ENCODE measurements at regions of chr3 and their contacts with region 1.

Region 1: DNA sequence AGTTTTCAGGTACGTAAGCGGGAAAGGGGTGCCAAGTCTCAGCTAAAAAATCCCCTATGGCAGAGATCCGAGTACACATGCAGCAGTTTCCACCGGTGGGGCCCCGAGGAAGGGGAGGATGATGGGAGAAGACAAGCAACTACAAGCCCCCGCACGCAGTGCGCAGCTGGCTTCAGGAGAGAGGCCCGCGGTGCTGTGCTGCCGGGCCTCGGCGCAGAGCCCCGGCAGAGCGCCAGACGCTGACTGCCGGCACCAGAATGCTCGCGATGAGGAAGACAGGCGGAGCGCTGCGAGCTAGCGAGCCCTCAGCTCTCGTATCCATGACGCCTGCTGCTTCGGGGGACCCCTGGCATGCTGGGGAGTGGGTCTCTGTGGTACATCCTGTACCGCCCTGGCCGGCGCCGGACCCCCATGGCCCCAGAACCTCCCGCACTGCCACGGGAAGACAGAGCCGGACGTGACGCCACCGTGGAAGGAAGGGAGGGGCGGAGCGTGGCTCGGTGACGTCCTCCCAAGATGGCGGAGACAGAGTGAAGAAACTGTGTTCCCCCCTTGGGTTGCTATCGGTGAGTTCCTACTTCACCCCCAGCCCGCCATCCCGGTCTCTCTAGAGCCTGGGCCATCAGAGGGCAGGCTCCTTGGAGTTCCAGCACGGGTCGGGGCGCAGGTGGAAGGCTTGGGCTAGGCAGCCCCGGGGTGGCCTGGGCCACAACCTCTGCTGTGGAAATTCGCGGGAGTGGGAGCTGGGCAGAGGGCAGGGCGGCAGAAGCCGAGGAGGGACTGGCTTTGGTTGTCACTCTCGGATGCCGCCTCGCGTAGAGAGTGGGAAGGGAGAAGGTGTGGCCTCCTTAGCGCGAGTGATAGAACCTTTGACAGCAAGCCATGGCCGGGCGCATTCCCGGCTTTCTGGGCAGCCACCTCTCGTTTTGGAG is at the start of gene MYNN:
- DNase-seq: peak; percentile 83 to 97 (median 92)
- ATAC-seq: peak; percentile 78
- H3K4me3 ChIP-seq: peak within 1 kb of the TSS; percentile 93 to 99
- H3K4me3 Mint-ChIP-seq: peak within 1 kb of the TSS; percentile 99
- H3K27ac ChIP-seq: peak within 1 kb of the TSS; percentile 97 to 100
- H3K27ac Mint-ChIP-seq: peak within 1 kb of the TSS; percentile 99
- H3K4me1 ChIP-seq: peaks cover 30% of the 10 kb centered on the region
- H3K4me1 Mint-ChIP-seq: peaks cover 50% of the 10 kb centered on the region
- H3K27me3 ChIP-seq: no peaks in the 10 kb centered on the region
- H3K27me3 Mint-ChIP-seq: no peaks in the 10 kb centered on the region
- CTCF ChIP-seq: no peak
- total RNA-seq, gene MYNN: 21.1 to 24.7 TPM

Region 2: GRCh38 chr3:169744366-169745054 is 28.7 kb before region 1 on chr3:
- CTCF ChIA-PET with region 1: no interaction called
- POLR2A ChIA-PET with region 1: no interaction called
- intact Hi-C with region 1: no loop called
- DNase-seq: peak in 1 of 9 experiments; percentile 22
- ATAC-seq: no peak
- H3K4me3 ChIP-seq: no peak overlapping the region
- H3K4me3 Mint-ChIP-seq: no peak overlapping the region
- H3K27ac ChIP-seq: no peak overlapping the region
- H3K27ac Mint-ChIP-seq: no peak overlapping the region
- H3K4me1 ChIP-seq: no peaks in the 10 kb centered on the region
- H3K4me1 Mint-ChIP-seq: peaks cover 3% of the 10 kb centered on the region
- H3K27me3 ChIP-seq: no peaks in the 10 kb centered on the region
- H3K27me3 Mint-ChIP-seq: peaks cover 20% of the 10 kb centered on the region
- CTCF ChIP-seq: peak; percentile 35

Region 3: GRCh38 chr3:169812332-169813235 is 39.4 kb after region 1 on chr3 and contains the starts of genes LRRC34 and LRRIQ4:
- CTCF ChIA-PET with region 1: no interaction called
- POLR2A ChIA-PET with region 1: interaction called, 17 read pairs
- intact Hi-C with region 1: loop called (anchors 1 to 2 kb)
- DNase-seq: peak; percentile 12 to 79 (median 68)
- ATAC-seq: peak; percentile 37
- H3K4me3 ChIP-seq: peak within 1 kb of the TSS; percentile 47 to 54
- H3K4me3 Mint-ChIP-seq: peak within 1 kb of the TSS; percentile 89
- H3K27ac ChIP-seq: peak within 1 kb of the TSS; percentile 2
- H3K27ac Mint-ChIP-seq: peak within 1 kb of the TSS; percentile 74
- H3K4me1 ChIP-seq: peaks cover 16% of the 10 kb centered on the region
- H3K4me1 Mint-ChIP-seq: peaks cover 28% of the 10 kb centered on the region
- H3K27me3 ChIP-seq: no peaks in the 10 kb centered on the region
- H3K27me3 Mint-ChIP-seq: no peaks in the 10 kb centered on the region
- CTCF ChIP-seq: no peak
- total RNA-seq, gene LRRC34: 0.36 to 0.54 TPM
- total RNA-seq, gene LRRIQ4: not detected

Region 4: DNA sequence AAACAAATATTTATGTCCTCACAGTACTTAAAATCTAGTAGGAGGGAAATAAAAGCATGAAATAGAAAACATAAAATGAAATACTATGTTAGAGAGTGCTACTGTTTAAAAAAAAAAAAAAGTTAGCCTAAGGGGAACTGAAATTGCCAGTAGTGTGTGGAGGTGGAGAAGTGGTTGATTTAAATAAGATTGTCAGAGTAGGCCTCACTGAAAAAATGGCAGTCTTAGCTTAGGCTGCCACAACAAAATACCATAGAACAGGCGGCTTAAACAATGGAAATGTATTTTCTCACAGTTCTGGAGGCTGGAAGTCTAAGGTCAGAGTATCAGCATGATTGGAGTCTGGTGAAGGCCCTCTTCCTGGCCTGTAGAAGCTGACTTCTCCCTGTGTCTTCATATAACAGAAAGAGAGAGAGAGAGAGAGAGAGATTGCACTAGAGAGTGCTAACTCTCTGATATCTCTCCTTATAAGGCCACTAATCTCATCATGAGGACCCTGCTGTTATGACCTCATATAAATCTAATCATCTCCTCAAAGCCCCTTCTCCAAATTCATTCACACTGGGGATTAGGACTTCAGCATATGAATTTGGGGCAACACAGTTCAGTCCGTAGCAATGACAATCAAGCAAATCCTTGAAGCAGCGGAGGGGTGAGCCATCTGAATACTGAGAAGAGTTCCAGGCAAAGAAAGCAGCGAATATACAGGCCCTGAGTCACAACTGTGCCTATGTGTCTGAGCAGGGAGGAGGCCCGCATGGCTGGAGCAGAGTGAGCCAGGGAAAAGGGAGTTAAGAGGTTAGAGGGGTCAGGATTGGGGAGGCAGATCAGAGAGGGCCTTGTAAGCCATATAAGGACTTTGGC is 63.1 kb after region 1 on chr3:
- CTCF ChIA-PET with region 1: no interaction called
- POLR2A ChIA-PET with region 1: no interaction called
- intact Hi-C with region 1: no loop called
- DNase-seq: no peak
- ATAC-seq: no peak
- H3K4me3 ChIP-seq: no peak overlapping the region
- H3K4me3 Mint-ChIP-seq: no peak overlapping the region
- H3K27ac ChIP-seq: no peak overlapping the region
- H3K27ac Mint-ChIP-seq: no peak overlapping the region
- H3K4me1 ChIP-seq: no peaks in the 10 kb centered on the region
- H3K4me1 Mint-ChIP-seq: no peaks in the 10 kb centered on the region
- H3K27me3 ChIP-seq: no peaks in the 10 kb centered on the region
- H3K27me3 Mint-ChIP-seq: peaks cover 11% of the 10 kb centered on the region
- CTCF ChIP-seq: no peak

Region 5: GRCh38 chr3:169923189-169923588 is 150.0 kb after region 1 on chr3:
- CTCF ChIA-PET with region 1: no interaction called
- POLR2A ChIA-PET with region 1: no interaction called
- intact Hi-C with region 1: no loop called
- DNase-seq: no peak
- ATAC-seq: no peak
- H3K4me3 ChIP-seq: no peak overlapping the region
- H3K4me3 Mint-ChIP-seq: no peak overlapping the region
- H3K27ac ChIP-seq: no peak overlapping the region
- H3K27ac Mint-ChIP-seq: no peak overlapping the region
- H3K4me1 ChIP-seq: no peaks in the 10 kb centered on the region
- H3K4me1 Mint-ChIP-seq: no peaks in the 10 kb centered on the region
- H3K27me3 ChIP-seq: no peaks in the 10 kb centered on the region
- H3K27me3 Mint-ChIP-seq: peaks cover 3% of the 10 kb centered on the region
- CTCF ChIP-seq: no peak

Region 6: GRCh38 chr3:170107941-170108340 is 334.8 kb after region 1 on chr3:
- CTCF ChIA-PET with region 1: interaction called, 4 read pairs
- POLR2A ChIA-PET with region 1: no interaction called
- intact Hi-C with region 1: loop called in 1 of 2 experiments (anchors 10 kb)
- DNase-seq: no peak
- ATAC-seq: no peak
- H3K4me3 ChIP-seq: no peak overlapping the region
- H3K4me3 Mint-ChIP-seq: no peak overlapping the region
- H3K27ac ChIP-seq: no peak overlapping the region
- H3K27ac Mint-ChIP-seq: no peak overlapping the region
- H3K4me1 ChIP-seq: peaks cover 10% of the 10 kb centered on the region
- H3K4me1 Mint-ChIP-seq: peaks cover 26% of the 10 kb centered on the region
- H3K27me3 ChIP-seq: no peaks in the 10 kb centered on the region
- H3K27me3 Mint-ChIP-seq: no peaks in the 10 kb centered on the region
- CTCF ChIP-seq: no peak

Region 7: DNA sequence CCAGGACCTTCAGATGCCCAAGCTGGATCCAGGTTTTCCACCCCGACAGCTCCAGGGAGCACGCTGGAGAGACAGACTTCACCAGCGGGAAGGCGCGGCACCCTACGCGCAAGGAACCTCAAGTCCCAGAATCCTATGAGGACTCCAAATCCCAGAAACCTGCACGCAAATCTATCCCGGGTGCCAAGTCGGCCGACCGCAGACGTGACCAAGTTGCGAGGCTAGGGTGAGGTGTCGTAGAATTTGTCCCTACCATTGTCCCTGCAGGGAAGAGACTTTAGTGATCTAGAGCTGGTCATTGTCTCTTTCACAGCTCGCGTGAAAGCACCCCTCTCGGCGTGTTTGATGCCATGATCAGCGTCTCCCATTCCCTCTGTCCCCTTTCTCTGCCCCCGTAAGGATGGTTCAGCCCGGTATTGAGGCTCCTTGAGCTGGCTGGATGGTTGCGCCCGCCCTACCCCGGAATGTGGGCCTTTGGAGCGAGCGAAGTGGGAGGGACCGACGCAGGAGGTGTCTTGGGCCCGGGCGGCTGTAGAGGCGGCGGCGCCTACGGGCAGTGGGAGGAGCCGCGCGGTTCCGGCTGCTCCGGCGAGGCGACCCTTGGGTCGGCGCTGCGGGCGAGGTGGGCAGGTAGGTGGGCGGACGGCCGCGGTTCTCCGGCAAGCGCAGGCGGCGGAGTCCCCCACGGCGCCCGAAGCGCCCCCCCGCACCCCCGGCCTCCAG is 448.9 kb after region 1 on chr3 and contains the start of gene PRKCI:
- CTCF ChIA-PET with region 1: no interaction called
- POLR2A ChIA-PET with region 1: interaction called, 6 read pairs
- intact Hi-C with region 1: loop called in 1 of 2 experiments (anchors 2 kb)
- DNase-seq: peak; percentile 75 to 94 (median 86)
- ATAC-seq: peak; percentile 83
- H3K4me3 ChIP-seq: peak within 1 kb of the TSS; percentile 64 to 92
- H3K4me3 Mint-ChIP-seq: peak within 1 kb of the TSS; percentile 91
- H3K27ac ChIP-seq: peak within 1 kb of the TSS; percentile 76 to 82
- H3K27ac Mint-ChIP-seq: peak within 1 kb of the TSS; percentile 93
- H3K4me1 ChIP-seq: peaks cover 3% of the 10 kb centered on the region
- H3K4me1 Mint-ChIP-seq: peaks cover 36% of the 10 kb centered on the region
- H3K27me3 ChIP-seq: no peaks in the 10 kb centered on the region
- H3K27me3 Mint-ChIP-seq: no peaks in the 10 kb centered on the region
- CTCF ChIP-seq: no peak
- total RNA-seq, gene PRKCI: 17.6 to 20.2 TPM

Region 8: DNA sequence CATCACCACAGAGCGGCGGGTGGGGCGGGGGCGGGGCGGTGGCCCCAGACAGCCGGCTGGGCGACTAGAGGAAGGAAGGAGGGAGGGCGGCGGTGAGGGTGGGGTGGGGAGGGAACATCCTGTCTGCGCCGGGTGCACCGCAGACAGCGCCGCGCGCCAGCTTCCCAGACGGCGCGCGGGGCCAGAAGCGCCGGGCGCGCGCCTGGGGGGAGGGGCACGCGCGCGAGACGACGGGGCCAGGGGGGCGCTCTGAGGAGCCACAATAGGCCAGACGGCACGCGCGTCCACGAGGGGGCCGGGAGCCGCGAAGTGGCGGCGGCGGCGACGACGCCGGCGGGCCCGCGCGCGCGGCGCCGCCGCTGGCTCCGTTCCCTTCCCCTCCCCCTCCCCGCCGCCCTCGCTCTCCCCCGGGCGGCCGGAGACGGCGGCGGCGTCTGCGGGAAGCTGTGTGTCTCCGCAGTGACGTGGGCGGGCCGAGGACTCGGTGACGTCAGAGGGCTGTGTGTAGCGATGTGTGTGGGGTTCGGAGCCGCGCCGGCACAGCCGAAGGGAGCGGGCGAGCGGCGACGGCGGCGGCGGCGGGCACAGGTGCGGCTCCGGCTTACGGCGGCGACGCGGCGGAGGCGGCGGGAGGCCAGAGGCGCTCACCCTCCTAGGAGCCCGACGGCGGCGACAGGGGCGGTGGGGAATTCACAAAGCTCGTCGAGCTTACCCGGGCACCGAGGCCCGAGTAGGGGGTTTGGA is 584.2 kb after region 1 on chr3 and contains the start of gene SKIL:
- CTCF ChIA-PET with region 1: no interaction called
- POLR2A ChIA-PET with region 1: interaction called, 4 read pairs
- intact Hi-C with region 1: loop called (anchors 2 to 5 kb)
- DNase-seq: peak; percentile 94 to 99 (median 97)
- ATAC-seq: peak; percentile 69
- H3K4me3 ChIP-seq: peak within 1 kb of the TSS; percentile 55 to 76
- H3K4me3 Mint-ChIP-seq: peak within 1 kb of the TSS; percentile 95
- H3K27ac ChIP-seq: peak within 1 kb of the TSS; percentile 91 to 96
- H3K27ac Mint-ChIP-seq: peak within 1 kb of the TSS; percentile 99
- H3K4me1 ChIP-seq: peaks cover 24% of the 10 kb centered on the region
- H3K4me1 Mint-ChIP-seq: peaks cover 52% of the 10 kb centered on the region
- H3K27me3 ChIP-seq: no peaks in the 10 kb centered on the region
- H3K27me3 Mint-ChIP-seq: no peaks in the 10 kb centered on the region
- CTCF ChIP-seq: no peak
- total RNA-seq, gene SKIL: 160 to 177 TPM

Region 9: GRCh38 chr3:170869645-170870593 is 1096.8 kb after region 1 on chr3 and contains the start of gene RPL22L1:
- CTCF ChIA-PET with region 1: no interaction called
- POLR2A ChIA-PET with region 1: no interaction called
- intact Hi-C with region 1: loop called in 1 of 2 experiments (anchors 2 kb)
- DNase-seq: peak; percentile 85 to 97 (median 93)
- ATAC-seq: peak; percentile 93
- H3K4me3 ChIP-seq: peak within 1 kb of the TSS; percentile 73 to 77
- H3K4me3 Mint-ChIP-seq: peak within 1 kb of the TSS; percentile 94
- H3K27ac ChIP-seq: peak within 1 kb of the TSS; percentile 84 to 94
- H3K27ac Mint-ChIP-seq: peak within 1 kb of the TSS; percentile 97
- H3K4me1 ChIP-seq: peaks cover 27% of the 10 kb centered on the region
- H3K4me1 Mint-ChIP-seq: peaks cover 28% of the 10 kb centered on the region
- H3K27me3 ChIP-seq: no peaks in the 10 kb centered on the region
- H3K27me3 Mint-ChIP-seq: no peaks in the 10 kb centered on the region
- CTCF ChIP-seq: no peak
- total RNA-seq, gene RPL22L1: 54.3 to 56.8 TPM

Region 10: GRCh38 chr3:170908235-170909116 is 1135.3 kb after region 1 on chr3 and contains the start of gene EIF5A2:
- CTCF ChIA-PET with region 1: no interaction called
- POLR2A ChIA-PET with region 1: no interaction called
- intact Hi-C with region 1: loop called (anchors 5 kb)
- DNase-seq: peak; percentile 89 to 98 (median 95)
- ATAC-seq: peak; percentile 96
- H3K4me3 ChIP-seq: peak within 1 kb of the TSS; percentile 66 to 68
- H3K4me3 Mint-ChIP-seq: peak within 1 kb of the TSS; percentile 95
- H3K27ac ChIP-seq: peak within 1 kb of the TSS; percentile 67 to 79
- H3K27ac Mint-ChIP-seq: peak within 1 kb of the TSS; percentile 97
- H3K4me1 ChIP-seq: peaks cover 12% of the 10 kb centered on the region
- H3K4me1 Mint-ChIP-seq: peaks cover 20% of the 10 kb centered on the region
- H3K27me3 ChIP-seq: no peaks in the 10 kb centered on the region
- H3K27me3 Mint-ChIP-seq: no peaks in the 10 kb centered on the region
- CTCF ChIP-seq: no peak
- total RNA-seq, gene EIF5A2: 10.6 to 12.7 TPM